Activated CD4-positive, alpha-beta T cell treated with anti-CD3 and anti-CD28 coated beads, Interleukin-2, amount 10 ng/mL, durations not matched to agents 24 days and 14 days (primary cell): ENCODE measurements at regions of chr2 and their contacts with region 1.

Region 1: GRCh38 chr2:135773917-135774316 is 32.3 kb downstream of the UBXN4 start:
- DNase-seq: no peak
- H3K4me3 Mint-ChIP-seq: no peak overlapping the region
- H3K27ac Mint-ChIP-seq: peak overlapping the region; percentile 56
- H3K4me1 Mint-ChIP-seq: peaks cover 11% of the 10 kb centered on the region
- H3K27me3 Mint-ChIP-seq: no peaks in the 10 kb centered on the region

Region 2: DNA sequence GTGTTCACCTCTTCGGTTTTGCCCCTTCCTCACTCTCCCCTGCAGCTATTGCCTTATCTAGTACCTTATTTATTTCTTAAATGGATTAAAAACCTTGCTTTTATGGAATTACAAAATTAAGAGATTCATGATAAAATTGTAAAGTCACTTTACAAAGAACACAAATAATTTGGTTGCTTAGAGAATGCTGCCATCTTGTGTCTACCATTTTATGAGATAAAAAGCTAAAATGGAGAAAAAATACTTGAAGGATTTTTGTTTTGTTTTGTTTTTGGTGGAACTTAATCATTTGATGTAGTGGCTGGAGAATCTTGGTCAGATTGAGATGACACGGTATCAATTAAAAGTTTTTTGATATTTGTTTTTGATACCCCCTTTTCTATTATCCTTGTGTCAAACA is 173.0 kb before region 1 on chr2:
- intact Hi-C with region 1: no loop called
- DNase-seq: no peak
- H3K4me3 Mint-ChIP-seq: no peak overlapping the region
- H3K27ac Mint-ChIP-seq: no peak overlapping the region
- H3K4me1 Mint-ChIP-seq: no peaks in the 10 kb centered on the region
- H3K27me3 Mint-ChIP-seq: no peaks in the 10 kb centered on the region

Region 3: GRCh38 chr2:135839713-135840112 is 65.8 kb after region 1 on chr2:
- intact Hi-C with region 1: loop called (anchors 10 kb)
- DNase-seq: no peak
- H3K4me3 Mint-ChIP-seq: no peak overlapping the region
- H3K27ac Mint-ChIP-seq: no peak overlapping the region
- H3K4me1 Mint-ChIP-seq: peaks cover 23% of the 10 kb centered on the region
- H3K27me3 Mint-ChIP-seq: no peaks in the 10 kb centered on the region

Region 4: GRCh38 chr2:135870571-135870970 is 96.7 kb after region 1 on chr2:
- intact Hi-C with region 1: loop called (anchors 5 kb)
- DNase-seq: no peak
- H3K4me3 Mint-ChIP-seq: no peak overlapping the region
- H3K27ac Mint-ChIP-seq: peak overlapping the region; percentile 57
- H3K4me1 Mint-ChIP-seq: peaks cover 46% of the 10 kb centered on the region
- H3K27me3 Mint-ChIP-seq: no peaks in the 10 kb centered on the region